HepG2 (cell line): ENCODE measurements at regions of chr9 and their contacts with region 1.

Region 1: GRCh38 chr9:7844242-7844641 is 44.7 kb upstream of the DMAC1 start:
- DNase-seq: peak; percentile 4
- ATAC-seq: peak; percentile 94
- H3K4me3 ChIP-seq: no peak overlapping the region
- H3K27ac ChIP-seq: no peak overlapping the region
- H3K4me1 ChIP-seq: no peaks in the 10 kb centered on the region
- H3K27me3 ChIP-seq: no peaks in the 10 kb centered on the region
- CTCF ChIP-seq: peak; percentile 56
- EP300 ChIP-seq: no peak
- POLR2A ChIP-seq: no peak
- RAD21 ChIP-seq: no peak

Region 2: DNA sequence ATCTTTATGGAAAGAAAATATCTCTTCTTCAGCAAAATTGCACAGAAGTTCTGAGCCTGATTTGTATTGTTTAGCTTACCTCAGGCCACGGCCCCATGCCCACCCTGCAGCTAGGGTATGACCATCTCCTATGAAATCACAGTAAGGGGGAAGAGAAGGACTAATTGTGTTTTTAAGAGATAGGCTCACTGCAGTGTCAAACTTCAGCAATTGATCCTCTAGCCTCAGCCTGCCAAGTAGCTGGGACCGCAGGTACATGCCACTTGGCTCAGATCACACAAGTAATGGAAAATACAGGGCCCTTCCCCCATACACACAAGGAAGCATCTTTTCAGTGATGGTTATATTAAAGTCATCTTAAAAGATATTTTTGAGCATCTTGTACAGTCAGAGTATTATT is 104.6 kb before region 1 on chr9:
- CTCF ChIA-PET with region 1: no interaction called
- POLR2A ChIA-PET with region 1: no interaction called
- in situ Hi-C with region 1: no loop called
- intact Hi-C with region 1: loop called (anchors 10 kb)
- DNase-seq: no peak
- ATAC-seq: no peak
- H3K4me3 ChIP-seq: no peak overlapping the region
- H3K27ac ChIP-seq: no peak overlapping the region
- H3K4me1 ChIP-seq: no peaks in the 10 kb centered on the region
- H3K27me3 ChIP-seq: no peaks in the 10 kb centered on the region
- CTCF ChIP-seq: no peak
- EP300 ChIP-seq: no peak
- POLR2A ChIP-seq: no peak
- RAD21 ChIP-seq: no peak

Region 3: GRCh38 chr9:8025551-8025950 is 181.3 kb after region 1 on chr9:
- CTCF ChIA-PET with region 1: no interaction called
- POLR2A ChIA-PET with region 1: no interaction called
- in situ Hi-C with region 1: no loop called
- intact Hi-C with region 1: no loop called
- DNase-seq: no peak
- ATAC-seq: no peak
- H3K4me3 ChIP-seq: no peak overlapping the region
- H3K27ac ChIP-seq: no peak overlapping the region
- H3K4me1 ChIP-seq: no peaks in the 10 kb centered on the region
- H3K27me3 ChIP-seq: no peaks in the 10 kb centered on the region
- CTCF ChIP-seq: no peak
- EP300 ChIP-seq: no peak
- POLR2A ChIP-seq: no peak
- RAD21 ChIP-seq: no peak